Heart left ventricle (tissue), 16 donors: ENCODE measurements at regions of chr16 and their contacts with region 1.

Region 1: DNA sequence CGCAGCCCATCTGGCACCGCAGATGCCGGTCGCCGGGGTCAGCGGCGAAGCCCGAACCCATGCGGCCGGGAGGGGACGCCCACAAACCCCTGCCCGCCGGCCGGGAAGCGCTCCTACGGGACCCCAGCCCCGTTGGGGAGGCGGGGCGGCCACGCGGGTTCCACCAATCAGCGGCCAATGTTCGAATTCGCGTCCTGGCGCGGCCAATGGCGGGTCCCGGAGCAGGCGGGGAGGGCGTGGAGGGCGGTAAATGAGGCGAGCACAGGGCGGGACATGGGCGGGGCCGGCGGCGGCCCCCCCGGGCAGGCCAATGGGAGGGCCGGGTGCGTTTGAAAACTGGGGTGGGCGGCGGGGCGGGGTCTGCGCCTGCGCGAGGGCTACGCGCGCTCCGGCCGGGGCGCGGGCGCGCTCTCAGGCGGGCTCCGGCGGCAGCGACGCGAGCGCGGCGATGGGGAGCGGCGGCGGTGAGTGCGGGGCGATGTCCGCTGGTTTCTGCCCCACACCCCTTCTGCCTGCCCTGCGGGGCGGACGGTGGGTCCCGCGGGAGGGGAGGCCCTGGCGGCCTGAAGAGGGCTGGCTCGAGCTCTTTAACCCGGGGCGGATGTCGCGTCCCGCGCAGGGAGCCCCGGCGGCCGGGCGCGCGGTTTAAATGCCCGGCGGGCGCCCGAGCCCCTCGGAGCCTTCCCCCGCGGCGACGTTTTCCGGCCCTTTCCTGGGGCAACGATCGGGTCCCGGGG is at the start of gene CCNF:
- DNase-seq: peak; percentile 98 to 99 (median 98)
- ATAC-seq: peak; percentile 98 to 99 (median 99)
- H3K4me3 ChIP-seq: peak within 1 kb of the TSS; percentile 60 to 98 (median 86)
- H3K27ac ChIP-seq: peak within 1 kb of the TSS in 11 of 12 donors; percentile 1 to 81 (median 67)
- H3K4me1 ChIP-seq: peaks cover 0 to 22% (median 14%) of the 10 kb centered on the region in 12 donors
- H3K27me3 ChIP-seq: no peaks in the 10 kb centered on the region
- CTCF ChIP-seq: peak in 5 of 12 donors; percentile 5 to 22 (median 18)
- POLR2A ChIP-seq: peak in 1 of 2 donors; percentile 48
- total RNA-seq, gene CCNF: 0.67 to 6.0 (median 1.6) TPM

Region 2: DNA sequence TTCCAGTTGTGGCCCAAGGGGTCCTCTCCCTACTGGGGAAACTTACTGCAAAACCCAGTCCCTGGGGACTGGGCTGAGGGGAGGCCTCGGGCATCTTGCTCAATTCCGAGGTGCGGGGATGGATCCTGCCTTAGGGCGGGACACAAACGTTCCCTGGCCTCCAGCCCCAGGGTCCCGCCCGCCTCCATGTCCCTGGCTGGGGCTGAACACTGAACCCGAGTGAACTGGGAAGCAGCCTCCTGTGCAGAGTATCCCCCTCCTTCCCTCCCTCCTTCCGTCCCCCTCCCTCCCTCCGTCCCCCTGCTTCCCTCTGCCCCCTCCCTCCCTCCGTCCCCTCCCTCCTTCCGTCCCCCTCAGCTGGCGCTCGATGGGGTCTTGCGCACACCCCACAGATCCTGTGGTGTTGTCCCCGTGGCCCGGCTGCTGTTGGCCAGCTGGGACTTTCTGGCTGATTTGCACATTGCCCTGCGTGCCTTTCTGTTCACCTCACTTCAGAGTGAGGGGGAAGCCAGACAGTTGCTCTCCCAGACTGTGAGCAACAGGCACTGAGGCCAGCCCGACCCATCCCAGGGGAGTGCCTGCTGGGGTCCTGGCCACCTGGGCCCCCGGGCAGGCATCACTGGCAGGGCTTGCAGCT is 268.2 kb before region 1 on chr16:
- intact Hi-C with region 1: loop called in 1 of 10 experiments (anchors 10 kb)
- DNase-seq: peak in 3 of 5 donors; percentile 50 to 82 (median 73)
- ATAC-seq: peak; percentile 8 to 66 (median 34)
- H3K4me3 ChIP-seq: peak overlapping the region in 2 of 12 donors; percentile 19 to 28
- H3K27ac ChIP-seq: peak overlapping the region in 10 of 12 donors; percentile 27 to 90 (median 46)
- H3K4me1 ChIP-seq: peaks cover 10 to 55% (median 31%) of the 10 kb centered on the region in 12 donors
- H3K27me3 ChIP-seq: no peaks in the 10 kb centered on the region
- CTCF ChIP-seq: no peak
- POLR2A ChIP-seq: no peak

Region 3: DNA sequence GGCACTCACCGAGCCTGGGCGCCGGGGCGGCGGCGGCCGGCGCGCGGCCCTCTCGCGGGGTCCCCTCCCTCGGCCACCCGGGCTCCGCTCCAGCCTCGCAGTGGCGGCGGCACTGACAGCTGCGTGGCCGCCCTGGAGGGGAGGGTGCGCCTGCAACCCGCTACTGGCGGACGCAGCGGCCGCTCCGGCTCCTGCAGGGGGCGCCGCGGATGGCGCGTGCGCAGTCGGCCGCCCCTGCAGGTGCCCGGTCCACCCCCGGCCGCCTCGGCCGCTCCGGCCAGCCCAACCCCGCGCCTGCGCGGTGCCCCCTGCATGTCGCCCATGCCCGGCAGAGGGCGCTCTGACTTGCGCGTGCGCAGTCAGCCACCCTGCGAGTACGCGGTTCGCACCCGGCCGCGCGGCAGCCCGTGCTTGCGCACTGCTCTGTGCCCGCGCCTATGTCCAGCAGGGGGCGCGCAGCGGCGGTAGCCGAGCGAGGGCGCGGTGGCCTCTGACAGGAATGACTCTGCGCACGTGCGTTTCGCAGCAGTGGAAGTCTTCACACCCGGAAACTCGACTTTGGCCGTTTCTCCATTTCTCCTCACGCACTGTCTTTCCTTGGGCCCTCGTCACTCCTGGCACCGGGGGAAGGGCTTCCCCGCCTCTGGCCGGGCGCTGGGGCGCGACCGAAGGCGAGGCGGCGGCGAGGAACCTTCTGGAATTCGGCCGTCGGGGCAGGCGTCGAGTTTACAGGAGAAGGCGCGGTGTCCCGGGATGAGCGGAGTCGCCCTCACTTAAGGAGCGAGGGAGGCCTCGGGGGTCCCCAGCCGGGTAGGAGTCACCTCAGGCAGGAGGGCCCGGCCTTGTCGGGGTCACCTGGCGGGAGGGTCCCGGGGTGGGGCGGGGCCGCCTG is 88.4 kb before region 1 on chr16 and contains the start of gene ABCA3:
- intact Hi-C with region 1: loop called in 9 of 10 experiments (anchors 2 to 5 kb)
- DNase-seq: peak; percentile 92 to 97 (median 93)
- ATAC-seq: peak; percentile 95 to 97 (median 96)
- H3K4me3 ChIP-seq: peak within 1 kb of the TSS; percentile 70 to 96 (median 82)
- H3K27ac ChIP-seq: peak within 1 kb of the TSS in 9 of 12 donors; percentile 14 to 73 (median 61)
- H3K4me1 ChIP-seq: peaks cover 0 to 24% (median 14%) of the 10 kb centered on the region in 12 donors
- H3K27me3 ChIP-seq: peaks cover 0 to 4% (median 0%) of the 10 kb centered on the region in 9 donors
- CTCF ChIP-seq: peak in 11 of 12 donors; percentile 99 to 100 (median 100)
- POLR2A ChIP-seq: peak in 1 of 2 donors; percentile 68
- total RNA-seq, gene ABCA3: 8.0 to 16.5 (median 10.0) TPM

Region 4: GRCh38 chr16:2474877-2475412 is 45.7 kb after region 1 on chr16 and contains the start of gene TBC1D24:
- intact Hi-C with region 1: loop called in 2 of 10 experiments (anchors 2 to 5 kb)
- DNase-seq: peak; percentile 88 to 95 (median 90)
- ATAC-seq: peak; percentile 80 to 93 (median 93)
- H3K4me3 ChIP-seq: peak within 1 kb of the TSS; percentile 62 to 87 (median 77)
- H3K27ac ChIP-seq: peak within 1 kb of the TSS; percentile 13 to 95 (median 88)
- H3K4me1 ChIP-seq: peaks cover 9 to 48% (median 28%) of the 10 kb centered on the region in 12 donors
- H3K27me3 ChIP-seq: peaks cover 11 to 36% (median 28%) of the 10 kb centered on the region in 9 donors
- CTCF ChIP-seq: no peak
- POLR2A ChIP-seq: peak in 1 of 2 donors; percentile 82
- total RNA-seq, gene TBC1D24: 8.9 to 19.2 (median 11.9) TPM

Region 5: GRCh38 chr16:2482707-2483534 is 53.7 kb after region 1 on chr16:
- intact Hi-C with region 1: loop called in 1 of 10 experiments (anchors 5 kb)
- DNase-seq: peak in 4 of 5 donors; percentile 54 to 69 (median 63)
- ATAC-seq: peak in 3 of 4 donors; percentile 40 to 57 (median 43)
- H3K4me3 ChIP-seq: peak overlapping the region in 3 of 12 donors; percentile 12 to 23 (median 13)
- H3K27ac ChIP-seq: peak overlapping the region in 6 of 12 donors; percentile 2 to 82 (median 28)
- H3K4me1 ChIP-seq: peaks cover 0 to 41% (median 23%) of the 10 kb centered on the region in 12 donors
- H3K27me3 ChIP-seq: no peaks in the 10 kb centered on the region
- CTCF ChIP-seq: no peak
- POLR2A ChIP-seq: no peak

Region 6: DNA sequence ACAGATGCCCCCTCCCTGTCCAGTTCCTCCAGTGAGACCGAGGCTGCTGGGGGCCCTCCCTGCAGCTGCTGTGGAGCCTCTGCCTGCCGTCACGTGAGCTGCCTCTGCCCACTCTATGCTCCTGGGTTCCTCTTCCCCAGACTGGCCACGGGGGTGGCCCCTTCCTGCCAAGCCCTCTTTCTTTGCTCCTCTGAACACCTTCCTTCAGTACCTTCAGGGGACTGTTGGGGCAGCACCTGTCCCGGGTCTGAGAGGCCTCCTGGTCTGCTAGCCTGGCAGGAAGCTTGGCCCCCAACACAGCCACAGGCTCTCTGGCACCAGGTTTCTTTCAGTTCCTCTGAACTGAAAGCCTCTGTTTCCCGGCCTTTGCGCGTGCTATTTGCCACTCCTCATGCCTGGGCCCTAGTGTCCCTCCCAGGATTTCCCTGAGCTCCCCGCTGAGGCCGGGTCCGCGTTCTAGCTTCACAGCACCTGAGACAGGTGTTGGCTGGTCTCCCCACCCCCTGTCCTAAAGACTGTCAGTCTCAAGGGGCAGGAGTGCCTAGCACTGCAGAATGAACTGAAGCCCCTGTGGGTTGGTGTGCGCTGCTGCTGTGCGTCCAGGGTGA is 78.0 kb after region 1 on chr16:
- intact Hi-C with region 1: loop called in 4 of 10 experiments (anchors 5 to 10 kb)
- DNase-seq: peak in 2 of 5 donors; percentile 34 to 69
- ATAC-seq: peak in 3 of 4 donors; percentile 18 to 65 (median 22)
- H3K4me3 ChIP-seq: peak overlapping the region in 1 of 12 donors; percentile 23
- H3K27ac ChIP-seq: peak overlapping the region in 6 of 12 donors; percentile 9 to 95 (median 28)
- H3K4me1 ChIP-seq: peaks cover 0 to 67% (median 7%) of the 10 kb centered on the region in 12 donors
- H3K27me3 ChIP-seq: no peaks in the 10 kb centered on the region
- CTCF ChIP-seq: no peak
- POLR2A ChIP-seq: no peak

Region 7: GRCh38 chr16:2520092-2520783 is 91.0 kb after region 1 on chr16 and contains the start of gene AMDHD2:
- intact Hi-C with region 1: no loop called
- DNase-seq: peak; percentile 92 to 95 (median 94)
- ATAC-seq: peak; percentile 80 to 93 (median 85)
- H3K4me3 ChIP-seq: peak within 1 kb of the TSS; percentile 18 to 90 (median 67)
- H3K27ac ChIP-seq: peak within 1 kb of the TSS in 11 of 12 donors; percentile 73 to 99 (median 85)
- H3K4me1 ChIP-seq: peaks cover 22 to 58% (median 53%) of the 10 kb centered on the region in 12 donors
- H3K27me3 ChIP-seq: no peaks in the 10 kb centered on the region
- CTCF ChIP-seq: no peak
- POLR2A ChIP-seq: peak in 1 of 2 donors; percentile 41
- total RNA-seq, gene AMDHD2: 8.9 to 34.0 (median 11.8) TPM